HCT116 (cell line): ENCODE measurements at regions of chr2 and their contacts with region 1.

Region 1: DNA sequence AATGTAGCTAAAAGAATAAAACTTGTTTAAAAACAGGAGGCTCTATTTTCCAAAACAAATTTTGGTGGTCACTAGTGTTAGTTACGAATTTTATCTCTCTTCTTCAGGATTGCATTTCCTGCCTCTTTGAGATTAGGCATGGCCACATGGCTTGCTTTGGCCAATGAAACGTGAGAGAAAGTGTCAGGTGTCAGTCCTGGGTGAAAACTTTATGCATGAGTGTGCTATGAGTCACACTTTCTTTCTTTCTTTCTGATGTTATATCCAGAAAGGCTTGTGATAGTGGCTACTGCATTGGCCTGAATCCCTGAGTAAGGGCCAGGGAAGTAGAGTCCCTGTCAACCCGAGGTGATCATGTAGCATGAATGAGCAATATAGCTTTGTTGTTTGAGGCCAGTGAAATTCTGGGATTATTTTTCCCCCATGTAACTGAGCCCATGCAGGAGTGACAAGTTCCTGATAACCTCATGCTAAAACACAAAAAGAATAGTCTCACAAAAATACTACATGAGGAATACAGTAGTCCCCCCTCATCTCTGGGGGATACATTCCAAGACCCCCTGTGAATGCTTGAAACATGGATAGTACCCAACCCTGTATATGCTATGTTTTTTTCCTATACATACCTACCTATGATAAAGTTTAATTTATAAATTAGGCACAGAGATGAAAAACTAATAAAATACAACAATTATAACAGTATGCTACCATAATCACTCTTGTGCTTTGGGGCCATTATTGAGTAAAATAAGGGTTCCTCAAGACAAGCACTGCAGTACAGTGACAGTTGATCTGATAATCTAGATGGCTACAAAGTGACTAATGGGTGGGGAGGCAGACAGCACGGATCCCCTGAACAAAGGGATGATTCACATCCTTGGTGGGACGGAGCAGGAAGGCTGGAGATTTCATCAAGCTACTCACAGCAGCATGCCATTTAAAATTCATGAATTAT is 109.5 kb downstream of the CDC42EP3 start:
- DNase-seq: peak; percentile 93
- ATAC-seq: peak; percentile 91
- H3K4me3 ChIP-seq: peak overlapping the region in 1 of 2 experiments; percentile 37; a peak in 2 of 4 replicates
- H3K27ac ChIP-seq: peak overlapping the region; percentile 77
- H3K4me1 ChIP-seq: peaks cover 21 to 45% of the 10 kb centered on the region in 2 experiments
- H3K27me3 ChIP-seq: no peaks in the 10 kb centered on the region
- CTCF ChIP-seq: no peak
- POLR2A ChIP-seq: no peak
- RAD21 ChIP-seq: peak; percentile 25; the same call in 1 of the 2 replicates

Region 2: GRCh38 chr2:37481244-37481643 is 80.6 kb before region 1 on chr2:
- CTCF ChIA-PET with region 1: no interaction called
- POLR2A ChIA-PET with region 1: no interaction called
- RAD21 ChIA-PET with region 1: no interaction called
- intact Hi-C with region 1: no loop called
- DNase-seq: no peak
- ATAC-seq: no peak
- H3K4me3 ChIP-seq: no peak overlapping the region
- H3K27ac ChIP-seq: no peak overlapping the region
- H3K4me1 ChIP-seq: no peaks in the 10 kb centered on the region
- H3K27me3 ChIP-seq: no peaks in the 10 kb centered on the region
- CTCF ChIP-seq: no peak
- POLR2A ChIP-seq: no peak
- RAD21 ChIP-seq: no peak

Region 3: DNA sequence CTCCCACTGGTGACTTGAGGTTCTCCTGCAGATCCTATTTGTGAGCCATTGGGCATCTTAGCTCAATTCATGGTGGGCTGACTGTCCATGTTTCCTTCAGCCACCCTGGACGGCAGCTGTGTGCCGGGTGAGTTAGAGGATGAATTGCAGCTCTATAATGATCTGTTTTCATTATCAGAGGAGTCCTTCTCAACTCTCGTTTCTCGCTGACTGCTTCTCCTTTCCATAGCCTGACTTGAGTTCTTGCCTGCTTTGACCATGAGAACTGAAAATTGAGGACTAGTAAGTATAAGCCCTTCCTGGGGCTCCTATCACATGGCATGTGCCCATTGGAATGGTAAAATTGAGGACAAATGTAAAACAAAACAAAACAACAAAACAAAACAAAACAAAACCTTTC is 12.3 kb before region 1 on chr2:
- CTCF ChIA-PET with region 1: no interaction called
- POLR2A ChIA-PET with region 1: no interaction called
- RAD21 ChIA-PET with region 1: no interaction called
- intact Hi-C with region 1: no loop called
- DNase-seq: no peak
- ATAC-seq: no peak
- H3K4me3 ChIP-seq: no peak overlapping the region
- H3K27ac ChIP-seq: no peak overlapping the region
- H3K4me1 ChIP-seq: peaks cover 0 to 8% of the 10 kb centered on the region in 2 experiments; a peak in 1 of 4 replicates
- H3K27me3 ChIP-seq: no peaks in the 10 kb centered on the region
- CTCF ChIP-seq: no peak
- POLR2A ChIP-seq: no peak
- RAD21 ChIP-seq: no peak

Region 4: DNA sequence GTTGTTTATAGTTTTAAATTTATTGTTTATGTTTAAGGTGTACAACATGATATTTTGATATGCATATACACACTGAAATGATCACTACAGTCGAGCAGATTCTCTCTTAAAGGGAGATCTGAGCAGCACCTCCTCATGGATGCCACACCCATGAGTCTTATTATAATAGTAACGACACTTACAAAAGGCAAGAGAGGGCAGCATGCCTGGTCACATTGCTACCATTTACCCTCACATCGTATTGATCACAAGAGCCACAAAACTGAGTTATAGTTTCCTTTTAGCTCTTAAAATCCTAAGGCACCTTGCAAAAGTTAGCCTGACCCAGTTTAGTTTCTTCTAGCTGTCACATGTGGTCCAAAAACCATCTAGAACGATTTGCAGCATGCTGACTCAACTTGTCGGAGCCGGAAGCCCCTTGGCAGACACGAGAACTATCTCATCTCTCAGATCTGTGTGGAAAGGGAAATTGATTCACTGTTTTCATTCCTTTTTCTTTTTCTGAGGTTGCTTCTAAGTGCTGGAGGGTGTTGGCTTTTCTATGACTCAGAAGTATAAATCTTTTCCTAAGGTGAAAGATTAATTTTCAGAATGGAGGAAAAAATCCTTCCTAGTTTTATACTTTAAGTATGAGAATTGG is 24.2 kb after region 1 on chr2:
- CTCF ChIA-PET with region 1: interaction called, 3 read pairs
- POLR2A ChIA-PET with region 1: interaction called, 19 read pairs
- RAD21 ChIA-PET with region 1: no interaction called
- intact Hi-C with region 1: loop called (anchors 1 kb)
- DNase-seq: peak; percentile 78
- ATAC-seq: peak; percentile 37
- H3K4me3 ChIP-seq: peak overlapping the region in 1 of 2 experiments; percentile 23; a peak in 2 of 4 replicates
- H3K27ac ChIP-seq: peak overlapping the region; percentile 84
- H3K4me1 ChIP-seq: peaks cover 64 to 79% of the 10 kb centered on the region in 2 experiments
- H3K27me3 ChIP-seq: no peaks in the 10 kb centered on the region
- CTCF ChIP-seq: 0 out of 6 replicates have a peak, but pooled peaks of 1 of the 3 experiments have one; percentile 5
- POLR2A ChIP-seq: no peak
- RAD21 ChIP-seq: 0 out of 2 replicates have a peak, but pooled peaks have one; percentile 14